ENCODE measurements at regions of chr5 and their contacts with region 1.

Region 1: GRCh38 chr5:96279801-96280542 is 153.1 kb downstream of the PCSK1 start:
- DNase-seq: no peak
- H3K4me3 Mint-ChIP-seq: no peak overlapping the region
- H3K27ac Mint-ChIP-seq: peak overlapping the region; percentile 47
- H3K4me1 Mint-ChIP-seq: peaks cover 25% of the 10 kb centered on the region
- H3K27me3 Mint-ChIP-seq: peaks cover 2% of the 10 kb centered on the region

Region 2: GRCh38 chr5:95591490-95591901 is 688.5 kb before region 1 on chr5:
- intact Hi-C with region 1: loop called (anchors 1 kb)
- DNase-seq: no peak
- H3K4me3 Mint-ChIP-seq: no peak overlapping the region
- H3K27ac Mint-ChIP-seq: peak overlapping the region; percentile 65
- H3K4me1 Mint-ChIP-seq: peaks cover 30% of the 10 kb centered on the region
- H3K27me3 Mint-ChIP-seq: no peaks in the 10 kb centered on the region

Region 3: GRCh38 chr5:95870105-95870672 is 409.8 kb before region 1 on chr5:
- intact Hi-C with region 1: loop called (anchors 2 kb)
- DNase-seq: peak; percentile 28
- H3K4me3 Mint-ChIP-seq: peak overlapping the region; percentile 37
- H3K27ac Mint-ChIP-seq: peak overlapping the region; percentile 89
- H3K4me1 Mint-ChIP-seq: peaks cover 45% of the 10 kb centered on the region
- H3K27me3 Mint-ChIP-seq: peaks cover 4% of the 10 kb centered on the region

Region 4: GRCh38 chr5:95973793-95974325 is 306.1 kb before region 1 on chr5:
- intact Hi-C with region 1: no loop called
- DNase-seq: no peak
- H3K4me3 Mint-ChIP-seq: no peak overlapping the region
- H3K27ac Mint-ChIP-seq: peak overlapping the region; percentile 64
- H3K4me1 Mint-ChIP-seq: peaks cover 11% of the 10 kb centered on the region
- H3K27me3 Mint-ChIP-seq: no peaks in the 10 kb centered on the region

Region 5: DNA sequence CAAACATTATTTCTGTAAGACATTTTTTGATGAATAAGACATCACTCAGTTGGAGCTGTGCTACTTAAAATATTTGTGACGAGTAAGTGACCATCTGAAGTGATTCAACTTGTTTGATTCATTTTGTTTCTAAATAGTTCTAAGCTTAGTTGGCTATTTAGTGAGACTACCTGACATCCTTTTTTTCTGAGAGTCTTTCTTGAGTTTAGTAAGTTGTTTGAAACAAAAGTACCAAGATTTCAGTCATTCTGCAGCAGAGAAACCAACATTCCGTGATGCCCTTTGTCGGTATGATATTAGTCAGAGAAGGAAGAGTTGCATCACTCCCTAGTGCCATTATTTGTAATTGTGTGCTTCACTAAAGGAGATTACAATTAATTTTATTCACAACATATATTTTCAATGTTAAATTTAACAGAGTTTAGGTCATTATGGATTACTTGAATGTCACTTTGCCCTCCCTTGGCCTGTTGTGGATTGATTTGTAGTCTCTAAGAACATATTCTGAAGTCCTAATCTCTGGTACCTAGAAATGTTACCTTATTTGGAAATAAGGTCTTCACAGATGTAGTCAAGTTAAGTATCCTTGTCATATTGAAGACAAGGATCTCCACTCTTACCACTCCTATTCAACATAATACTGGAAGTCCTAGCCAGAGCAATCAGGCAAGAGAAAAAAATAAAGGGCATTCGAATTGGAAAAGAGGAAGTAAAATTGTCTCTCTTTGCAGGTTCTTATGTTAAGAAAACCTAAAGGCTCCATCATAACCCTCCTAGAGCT is 59.2 kb before region 1 on chr5:
- intact Hi-C with region 1: loop called (anchors 2 kb)
- DNase-seq: no peak
- H3K4me3 Mint-ChIP-seq: no peak overlapping the region
- H3K27ac Mint-ChIP-seq: peak overlapping the region; percentile 64
- H3K4me1 Mint-ChIP-seq: peaks cover 15% of the 10 kb centered on the region
- H3K27me3 Mint-ChIP-seq: no peaks in the 10 kb centered on the region

Region 6: DNA sequence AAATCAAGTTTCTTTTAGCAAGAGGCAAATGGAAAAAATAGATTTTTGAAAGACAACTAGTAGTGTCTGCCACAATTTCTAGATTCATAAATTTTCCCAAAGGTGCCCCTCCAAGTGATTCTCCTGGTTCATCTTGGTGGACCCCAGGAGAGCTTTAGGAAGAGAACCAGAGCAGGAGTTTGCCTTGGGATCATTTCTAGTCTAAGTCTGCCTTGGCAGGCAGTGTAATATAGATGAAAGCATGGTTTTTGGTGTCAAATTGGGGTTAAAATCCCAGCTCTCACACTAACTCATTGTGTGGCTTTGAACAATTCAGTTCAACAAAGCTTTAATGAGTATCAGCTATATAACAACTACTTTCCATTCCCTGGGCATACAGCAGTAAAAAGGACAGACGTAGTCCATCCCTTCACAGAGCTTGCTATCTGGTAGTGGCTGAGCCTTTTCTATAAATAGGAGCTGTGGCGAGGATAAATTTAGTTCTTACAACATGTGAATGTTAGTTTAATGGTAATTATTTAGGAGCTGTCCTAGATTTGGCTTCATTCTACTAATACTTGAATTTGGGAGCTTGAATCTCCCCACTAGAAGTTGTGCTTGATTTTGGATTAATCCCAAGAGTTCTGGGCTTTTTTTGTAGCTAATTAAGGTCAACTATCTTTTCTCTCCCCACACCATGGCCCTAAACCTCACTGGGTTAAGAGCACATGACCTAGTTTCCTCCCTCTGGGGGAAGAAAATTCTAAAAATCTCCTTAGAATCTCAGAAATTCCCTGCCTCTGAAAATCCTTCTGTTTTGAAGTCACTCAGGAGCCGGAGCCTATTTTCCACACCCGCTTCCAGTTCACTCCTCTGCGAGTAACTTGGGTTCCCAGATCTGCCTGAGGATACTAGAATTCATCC is 44.7 kb before region 1 on chr5:
- intact Hi-C with region 1: no loop called
- DNase-seq: no peak
- H3K4me3 Mint-ChIP-seq: no peak overlapping the region
- H3K27ac Mint-ChIP-seq: no peak overlapping the region
- H3K4me1 Mint-ChIP-seq: no peaks in the 10 kb centered on the region
- H3K27me3 Mint-ChIP-seq: peaks cover 14% of the 10 kb centered on the region

Region 7: GRCh38 chr5:96336351-96336985 is 56.5 kb after region 1 on chr5:
- intact Hi-C with region 1: loop called (anchors 2 kb)
- DNase-seq: peak; percentile 38
- H3K4me3 Mint-ChIP-seq: no peak overlapping the region
- H3K27ac Mint-ChIP-seq: no peak overlapping the region
- H3K4me1 Mint-ChIP-seq: peaks cover 14% of the 10 kb centered on the region
- H3K27me3 Mint-ChIP-seq: peaks cover 21% of the 10 kb centered on the region